Right ventricle myocardium inferior (tissue), 1 donor: ENCODE measurements at regions of chr4 and their contacts with region 1.

Region 1: DNA sequence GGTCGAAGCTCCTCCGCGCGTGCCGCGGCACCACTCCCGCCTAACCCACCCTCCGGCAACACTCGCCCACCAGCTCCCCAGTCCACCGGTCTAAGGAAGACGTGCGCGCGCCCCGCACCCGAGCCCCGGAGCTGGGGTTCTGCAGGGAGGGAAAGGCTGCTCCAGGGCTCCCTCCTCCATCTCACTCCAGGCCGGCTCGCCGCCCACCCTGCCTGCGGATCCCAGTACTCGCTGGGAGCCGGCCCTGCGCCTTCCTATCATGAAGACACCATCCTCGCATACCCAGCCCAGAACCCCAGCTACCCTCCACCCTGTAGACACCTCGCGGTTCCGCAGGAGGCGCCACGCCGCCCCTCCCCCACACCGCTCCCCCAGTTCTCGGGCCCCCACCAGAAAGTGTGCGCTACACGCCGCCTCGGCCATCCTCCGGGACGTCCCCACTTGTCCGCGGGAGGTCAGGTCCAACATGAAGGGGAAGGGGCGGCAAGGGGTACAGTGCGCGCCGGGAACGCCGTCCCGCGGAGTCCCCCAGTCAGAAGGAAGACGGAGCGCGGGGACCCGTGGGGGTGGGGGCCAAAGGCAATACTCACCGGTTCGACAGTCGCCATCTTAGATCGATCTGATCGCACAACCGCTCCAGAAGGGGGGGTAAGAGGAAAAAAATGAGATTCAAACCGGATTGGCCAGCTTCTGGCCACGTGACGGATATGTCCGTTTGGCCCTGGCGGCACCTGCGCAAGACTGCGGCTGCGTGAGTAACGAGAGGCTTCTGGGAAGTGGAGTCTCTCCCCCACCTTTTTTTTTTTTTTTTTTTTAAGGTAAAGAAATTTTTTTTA is at the start of gene EIF4E:
- DNase-seq: peak; percentile 99
- ATAC-seq: peak; percentile 97
- total RNA-seq, gene EIF4E: 50.7 TPM

Region 2: GRCh38 chr4:98143001-98143899 is 785.5 kb before region 1 on chr4 and contains the start of gene STPG2:
- intact Hi-C with region 1: loop called (anchors 10 kb)
- DNase-seq: peak; percentile 96
- ATAC-seq: peak; percentile 100
- total RNA-seq, gene STPG2: 0.43 TPM

Region 3: DNA sequence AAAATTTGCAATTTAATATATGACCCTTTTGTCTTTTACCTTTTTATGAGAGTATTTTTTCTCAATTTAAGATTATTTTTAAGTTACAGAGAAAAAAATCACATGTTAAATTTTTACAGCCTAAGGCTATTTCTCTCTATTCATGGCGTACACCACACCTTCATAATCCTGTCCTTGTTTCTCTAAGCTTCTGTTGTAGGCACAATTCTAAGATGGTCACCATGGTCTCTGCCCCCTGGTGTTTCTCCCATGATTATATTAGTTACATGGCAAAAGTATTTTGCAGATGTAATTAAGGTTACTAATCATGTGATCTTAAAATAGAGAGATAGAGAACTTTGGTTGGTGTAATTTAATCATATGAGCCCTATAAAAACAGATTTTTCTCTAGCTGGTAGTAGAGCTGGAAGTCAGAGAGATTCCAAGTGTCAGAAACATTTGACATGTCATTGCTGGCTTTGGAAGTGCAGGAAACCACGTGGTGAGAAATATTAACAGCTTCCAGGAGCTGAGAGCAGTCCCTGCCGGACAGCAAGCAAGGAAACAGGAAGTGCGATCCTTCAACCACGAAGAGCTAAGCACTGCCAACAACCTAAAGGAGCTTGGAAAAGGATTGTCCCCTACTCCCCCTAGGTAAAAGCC is 89.6 kb before region 1 on chr4:
- intact Hi-C with region 1: loop called (anchors 1 kb)
- DNase-seq: no peak
- ATAC-seq: peak; percentile 84

Region 4: GRCh38 chr4:98995183-98996055 is 66.7 kb after region 1 on chr4 and contains the start of gene METAP1:
- intact Hi-C with region 1: loop called (anchors 2 kb)
- DNase-seq: peak; percentile 97
- ATAC-seq: peak; percentile 96
- total RNA-seq, gene METAP1: 67.4 TPM

Region 5: DNA sequence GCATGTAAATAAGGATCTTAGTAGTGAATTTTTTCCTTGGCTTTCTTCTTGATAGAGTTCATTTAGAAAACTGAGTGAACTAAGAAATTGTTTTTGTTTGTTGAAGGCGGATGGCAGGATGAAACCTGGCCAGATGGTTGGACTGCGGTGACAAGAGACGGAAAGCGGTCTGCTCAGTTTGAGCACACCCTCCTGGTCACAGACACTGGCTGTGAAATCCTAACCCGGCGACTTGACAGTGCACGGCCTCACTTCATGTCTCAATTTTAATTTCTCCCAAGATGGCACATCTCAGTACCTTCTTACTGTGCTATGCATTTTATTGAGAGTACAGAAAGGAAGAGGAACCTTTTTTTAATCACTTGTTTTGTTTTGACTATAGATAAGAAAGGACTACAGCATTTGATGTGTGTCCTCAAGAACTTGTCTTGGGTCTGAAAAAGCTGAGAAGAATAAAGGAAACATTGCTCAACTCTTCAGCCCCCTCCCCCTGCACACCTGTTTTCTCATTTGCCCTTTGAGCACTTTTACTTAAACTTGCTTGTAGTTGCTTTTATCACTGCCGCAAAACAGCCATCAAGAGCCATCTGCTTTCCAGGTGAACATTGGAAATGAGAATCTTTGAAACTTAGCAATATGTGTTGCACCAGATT is 132.5 kb after region 1 on chr4:
- intact Hi-C with region 1: loop called (anchors 5 kb)
- DNase-seq: no peak
- ATAC-seq: no peak

Region 6: GRCh38 chr4:99088481-99089365 is 160.0 kb after region 1 on chr4 and contains the start of gene ADH5:
- intact Hi-C with region 1: loop called (anchors 2 kb)
- DNase-seq: peak; percentile 95
- ATAC-seq: peak; percentile 99
- total RNA-seq, gene ADH5: 193 TPM